ENCODE measurements at regions of chr9 and their contacts with region 1.

Region 1: GRCh38 chr9:125950880-125951471 is 203.8 kb downstream of the PBX3 start:
- DNase-seq: no peak
- ATAC-seq: no peak
- H3K4me3 ChIP-seq: no peak overlapping the region
- H3K27ac ChIP-seq: no peak overlapping the region
- H3K4me1 ChIP-seq: peaks cover 36% of the 10 kb centered on the region
- H3K27me3 ChIP-seq: no peaks in the 10 kb centered on the region
- CTCF ChIP-seq: no peak
- EP300 ChIP-seq: no peak
- POLR2A ChIP-seq: no peak
- RAD21 ChIP-seq: no peak

Region 2: GRCh38 chr9:125990751-125991220 is 39.8 kb after region 1 on chr9:
- CTCF ChIA-PET with region 1: no interaction called
- POLR2A ChIA-PET with region 1: no interaction called
- in situ Hi-C with region 1: no loop called
- intact Hi-C with region 1: loop called (anchors 1 kb)
- DNase-seq: no peak
- ATAC-seq: no peak
- H3K4me3 ChIP-seq: no peak overlapping the region
- H3K27ac ChIP-seq: no peak overlapping the region
- H3K4me1 ChIP-seq: peaks cover 10% of the 10 kb centered on the region
- H3K27me3 ChIP-seq: peaks cover 0 to 20% of the 10 kb centered on the region in 2 experiments; a peak in 2 of 5 replicates
- CTCF ChIP-seq: no peak
- EP300 ChIP-seq: no peak
- POLR2A ChIP-seq: no peak
- RAD21 ChIP-seq: no peak

Region 3: GRCh38 chr9:126128494-126129142 is 177.6 kb after region 1 on chr9:
- CTCF ChIA-PET with region 1: no interaction called
- POLR2A ChIA-PET with region 1: no interaction called
- in situ Hi-C with region 1: no loop called
- intact Hi-C with region 1: no loop called
- DNase-seq: no peak
- ATAC-seq: no peak
- H3K4me3 ChIP-seq: no peak overlapping the region
- H3K27ac ChIP-seq: no peak overlapping the region
- H3K4me1 ChIP-seq: no peaks in the 10 kb centered on the region
- H3K27me3 ChIP-seq: peaks cover 1 to 14% of the 10 kb centered on the region in 2 experiments; a peak in 2 of 5 replicates
- CTCF ChIP-seq: no peak
- EP300 ChIP-seq: no peak
- POLR2A ChIP-seq: no peak
- RAD21 ChIP-seq: no peak